ENCODE measurements at regions of chr4 and their contacts with region 1.

Region 1: DNA sequence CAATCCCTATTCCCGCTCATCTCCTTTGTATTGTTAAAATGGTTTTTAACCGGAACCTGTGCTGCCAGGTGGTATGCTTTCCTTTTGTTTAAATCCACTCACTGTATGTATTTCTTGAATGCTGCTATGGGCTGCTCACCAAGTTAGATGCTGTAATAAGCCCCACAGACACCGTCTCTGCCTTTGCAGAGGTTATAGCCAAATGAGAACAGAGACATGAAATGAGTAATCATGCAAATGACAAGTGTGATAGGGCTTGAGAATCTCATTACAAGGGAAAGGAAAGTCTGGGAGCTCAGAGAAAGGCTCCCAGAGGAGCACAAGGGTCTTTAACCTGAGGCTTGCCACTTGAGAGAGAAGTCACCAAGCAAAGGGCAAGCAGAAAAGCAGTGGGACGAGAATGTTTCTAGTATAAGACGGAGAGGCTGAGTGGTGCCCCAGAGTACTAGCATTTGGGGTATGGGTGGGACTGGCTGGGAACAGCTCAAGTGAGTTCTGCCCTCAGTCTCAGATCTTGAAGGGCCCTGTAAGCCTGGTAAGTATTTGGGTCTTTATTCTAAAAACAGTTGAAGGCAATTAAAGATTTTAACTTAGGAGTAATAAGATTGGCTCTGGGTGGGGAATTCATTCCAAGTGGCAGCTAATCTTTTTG is 110.8 kb upstream of the H2AZ1 start:
- DNase-seq: no peak
- ATAC-seq: no peak
- H3K4me3 ChIP-seq: no peak overlapping the region
- H3K27ac ChIP-seq: no peak overlapping the region; a peak in 1 of 6 replicates
- H3K4me1 ChIP-seq: peaks cover 19% of the 10 kb centered on the region; the same call in 2 of the 3 replicates
- CTCF ChIP-seq: no peak
- EP300 ChIP-seq: no peak
- POLR2A ChIP-seq: no peak
- RAD21 ChIP-seq: no peak

Region 2: GRCh38 chr4:99998062-99998867 is 62.6 kb before region 1 on chr4:
- CTCF ChIA-PET with region 1: interaction called, 23 read pairs
- POLR2A ChIA-PET with region 1: no interaction called
- DNase-seq: peak; percentile 13 to 34
- ATAC-seq: peak; percentile 50 to 54; a peak in 3 of 6 replicates
- H3K4me3 ChIP-seq: no peak overlapping the region
- H3K27ac ChIP-seq: no peak overlapping the region; a peak in 1 of 6 replicates
- H3K4me1 ChIP-seq: peaks cover 3% of the 10 kb centered on the region; the same call in 1 of the 3 replicates
- CTCF ChIP-seq: peak; percentile 52; the same call in 2 of the 3 replicates
- EP300 ChIP-seq: no peak
- POLR2A ChIP-seq: no peak
- RAD21 ChIP-seq: peak; percentile 41 to 63; a peak in 3 of 5 replicates